GM12878 (cell line): ENCODE measurements at regions of chr1 and their contacts with region 1.

Region 1: GRCh38 chr1:43763497-43763973 is 56.2 kb downstream of the ST3GAL3 start:
- DNase-seq: peak; percentile 72
- ATAC-seq: peak; percentile 87
- H3K4me3 ChIP-seq: no peak overlapping the region
- H3K27ac ChIP-seq: no peak overlapping the region
- H3K4me1 ChIP-seq: peaks cover 18% of the 10 kb centered on the region
- H3K27me3 ChIP-seq: no peaks in the 10 kb centered on the region
- CTCF ChIP-seq: peak; percentile 83 to 98 (median 92)
- EP300 ChIP-seq: no peak
- POLR2A ChIP-seq: no peak
- RAD21 ChIP-seq: peak; percentile 99

Region 2: GRCh38 chr1:43238085-43238484 is 525.5 kb before region 1 on chr1:
- CTCF ChIA-PET with region 1: interaction called, 4 read pairs
- POLR2A ChIA-PET with region 1: no interaction called
- RAD21 ChIA-PET with region 1: interaction called, 4 read pairs
- SMC1A ChIA-PET with region 1: interaction called, 5 read pairs
- in situ Hi-C with region 1: no loop called
- intact Hi-C with region 1: loop called (anchors 5 kb)
- DNase-seq: no peak
- ATAC-seq: peak; percentile 64
- H3K4me3 ChIP-seq: no peak overlapping the region
- H3K27ac ChIP-seq: no peak overlapping the region
- H3K4me1 ChIP-seq: peaks cover 19% of the 10 kb centered on the region
- H3K27me3 ChIP-seq: no peaks in the 10 kb centered on the region
- CTCF ChIP-seq: peak; percentile 62 to 76 (median 74)
- EP300 ChIP-seq: no peak
- POLR2A ChIP-seq: no peak
- RAD21 ChIP-seq: peak; percentile 91

Region 3: GRCh38 chr1:43348809-43349583 is 414.5 kb before region 1 on chr1:
- CTCF ChIA-PET with region 1: no interaction called
- POLR2A ChIA-PET with region 1: no interaction called
- RAD21 ChIA-PET with region 1: no interaction called
- SMC1A ChIA-PET with region 1: no interaction called
- in situ Hi-C with region 1: no loop called
- intact Hi-C with region 1: no loop called
- DNase-seq: no peak
- ATAC-seq: no peak
- H3K4me3 ChIP-seq: peak overlapping the region; percentile 50; the same call in 1 of the 2 replicates
- H3K27ac ChIP-seq: peak overlapping the region; percentile 58; the same call in 1 of the 2 replicates
- H3K4me1 ChIP-seq: no peaks in the 10 kb centered on the region
- H3K27me3 ChIP-seq: no peaks in the 10 kb centered on the region
- CTCF ChIP-seq: no peak
- EP300 ChIP-seq: no peak
- POLR2A ChIP-seq: peak; percentile 68
- RAD21 ChIP-seq: no peak

Region 4: GRCh38 chr1:43611950-43612349 is 151.6 kb before region 1 on chr1:
- CTCF ChIA-PET with region 1: no interaction called
- POLR2A ChIA-PET with region 1: no interaction called
- RAD21 ChIA-PET with region 1: no interaction called
- SMC1A ChIA-PET with region 1: no interaction called
- in situ Hi-C with region 1: no loop called
- intact Hi-C with region 1: no loop called
- DNase-seq: no peak
- ATAC-seq: no peak
- H3K4me3 ChIP-seq: no peak overlapping the region
- H3K27ac ChIP-seq: no peak overlapping the region
- H3K4me1 ChIP-seq: no peaks in the 10 kb centered on the region
- H3K27me3 ChIP-seq: no peaks in the 10 kb centered on the region; a peak in 3 of 4 replicates
- CTCF ChIP-seq: no peak; a peak in 1 of 6 replicates
- EP300 ChIP-seq: no peak
- POLR2A ChIP-seq: no peak
- RAD21 ChIP-seq: no peak

Region 5: DNA sequence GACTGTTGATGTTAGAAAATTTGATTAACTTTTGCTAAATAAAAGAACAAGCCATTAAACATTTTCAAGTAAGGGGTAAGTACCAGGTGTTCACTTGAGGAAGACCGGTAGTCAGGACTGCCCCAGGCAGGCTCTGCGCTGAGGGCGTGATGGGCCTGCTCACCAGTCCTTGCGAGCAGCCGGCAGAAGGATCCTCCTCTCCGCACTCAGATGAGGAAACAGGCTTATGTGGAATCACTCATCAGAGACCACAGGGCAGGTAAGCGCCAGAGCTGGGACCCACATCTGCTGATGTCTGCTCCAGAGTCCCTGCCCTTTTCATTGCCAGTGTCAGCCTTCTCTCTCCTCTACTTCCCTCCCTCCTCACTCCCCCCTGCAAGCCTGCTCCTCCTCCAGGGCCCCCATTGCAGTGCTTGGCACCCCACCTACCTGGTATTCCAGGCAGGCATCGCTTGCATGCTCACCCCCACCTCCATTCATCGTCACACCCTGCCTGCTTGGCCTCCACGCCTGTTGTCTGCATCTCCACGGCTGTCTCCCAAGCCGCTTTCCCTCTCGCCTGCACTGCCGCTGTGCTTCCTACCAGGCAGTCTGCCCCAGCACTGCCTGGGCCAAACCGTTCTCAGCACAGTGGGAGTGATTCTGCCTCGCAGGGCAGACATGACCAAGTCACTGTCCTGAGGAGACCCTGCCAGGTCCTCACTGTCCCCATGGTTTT is 138.3 kb before region 1 on chr1:
- CTCF ChIA-PET with region 1: no interaction called
- POLR2A ChIA-PET with region 1: no interaction called
- RAD21 ChIA-PET with region 1: no interaction called
- SMC1A ChIA-PET with region 1: no interaction called
- in situ Hi-C with region 1: no loop called
- intact Hi-C with region 1: no loop called
- DNase-seq: no peak
- ATAC-seq: no peak
- H3K4me3 ChIP-seq: no peak overlapping the region
- H3K27ac ChIP-seq: no peak overlapping the region
- H3K4me1 ChIP-seq: no peaks in the 10 kb centered on the region
- H3K27me3 ChIP-seq: no peaks in the 10 kb centered on the region; a peak in 3 of 4 replicates
- CTCF ChIP-seq: no peak
- EP300 ChIP-seq: no peak
- POLR2A ChIP-seq: no peak
- RAD21 ChIP-seq: no peak

Region 6: GRCh38 chr1:43774359-43774758 is 10.8 kb after region 1 on chr1:
- CTCF ChIA-PET with region 1: interaction called, 34 read pairs
- POLR2A ChIA-PET with region 1: interaction called, 6 read pairs
- RAD21 ChIA-PET with region 1: interaction called, 8 read pairs
- SMC1A ChIA-PET with region 1: interaction called, 48 read pairs
- in situ Hi-C with region 1: no loop called
- intact Hi-C with region 1: no loop called
- DNase-seq: no peak
- ATAC-seq: no peak
- H3K4me3 ChIP-seq: no peak overlapping the region
- H3K27ac ChIP-seq: no peak overlapping the region
- H3K4me1 ChIP-seq: peaks cover 9% of the 10 kb centered on the region
- H3K27me3 ChIP-seq: no peaks in the 10 kb centered on the region
- CTCF ChIP-seq: no peak
- EP300 ChIP-seq: no peak
- POLR2A ChIP-seq: no peak
- RAD21 ChIP-seq: no peak

Region 7: DNA sequence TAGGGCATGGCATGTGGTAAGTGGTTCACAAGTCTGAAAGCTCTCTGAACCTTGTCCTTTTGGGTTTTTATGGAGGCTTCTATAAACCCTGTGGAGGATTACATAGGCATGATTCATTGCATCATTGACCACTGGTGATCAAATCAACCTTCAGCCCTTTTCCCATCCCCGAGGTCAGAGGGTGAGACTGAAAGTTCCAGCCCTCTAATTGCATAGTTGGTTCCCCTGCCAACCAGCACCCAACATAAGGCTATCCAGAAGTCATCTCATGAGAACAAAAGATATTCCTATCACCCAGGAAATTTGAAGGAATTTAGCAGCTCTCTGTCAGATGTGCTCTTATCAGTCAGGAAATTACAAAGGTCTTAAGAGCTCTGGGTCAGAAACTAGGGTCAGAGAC is 80.6 kb after region 1 on chr1:
- CTCF ChIA-PET with region 1: interaction called, 25 read pairs
- POLR2A ChIA-PET with region 1: no interaction called
- RAD21 ChIA-PET with region 1: interaction called, 8 read pairs
- SMC1A ChIA-PET with region 1: interaction called, 12 read pairs
- in situ Hi-C with region 1: no loop called
- intact Hi-C with region 1: no loop called
- DNase-seq: no peak
- ATAC-seq: no peak
- H3K4me3 ChIP-seq: no peak overlapping the region
- H3K27ac ChIP-seq: no peak overlapping the region
- H3K4me1 ChIP-seq: peaks cover 8% of the 10 kb centered on the region
- H3K27me3 ChIP-seq: no peaks in the 10 kb centered on the region
- CTCF ChIP-seq: no peak
- EP300 ChIP-seq: no peak
- POLR2A ChIP-seq: no peak
- RAD21 ChIP-seq: no peak

Region 8: GRCh38 chr1:43902058-43902831 is 138.7 kb after region 1 on chr1:
- CTCF ChIA-PET with region 1: interaction called, 22 read pairs
- POLR2A ChIA-PET with region 1: no interaction called
- RAD21 ChIA-PET with region 1: interaction called, 73 read pairs
- SMC1A ChIA-PET with region 1: interaction called, 74 read pairs
- in situ Hi-C with region 1: no loop called
- intact Hi-C with region 1: no loop called
- DNase-seq: no peak
- ATAC-seq: no peak
- H3K4me3 ChIP-seq: no peak overlapping the region
- H3K27ac ChIP-seq: no peak overlapping the region
- H3K4me1 ChIP-seq: no peaks in the 10 kb centered on the region
- H3K27me3 ChIP-seq: no peaks in the 10 kb centered on the region
- CTCF ChIP-seq: no peak
- EP300 ChIP-seq: no peak
- POLR2A ChIP-seq: no peak
- RAD21 ChIP-seq: no peak

Region 9: GRCh38 chr1:43946236-43947060 is 182.9 kb after region 1 on chr1 and contains the start of gene IPO13:
- CTCF ChIA-PET with region 1: interaction called, 1,117 read pairs
- POLR2A ChIA-PET with region 1: interaction called, 4 read pairs
- RAD21 ChIA-PET with region 1: interaction called, 78 read pairs
- SMC1A ChIA-PET with region 1: interaction called, 100 read pairs
- in situ Hi-C with region 1: no loop called
- intact Hi-C with region 1: no loop called
- DNase-seq: peak; percentile 89
- ATAC-seq: peak; percentile 96
- H3K4me3 ChIP-seq: peak within 1 kb of the TSS; percentile 96
- H3K27ac ChIP-seq: peak within 1 kb of the TSS; percentile 93
- H3K4me1 ChIP-seq: peaks cover 10% of the 10 kb centered on the region
- H3K27me3 ChIP-seq: no peaks in the 10 kb centered on the region
- CTCF ChIP-seq: peak; percentile 83 to 87 (median 85)
- EP300 ChIP-seq: no peak
- POLR2A ChIP-seq: peak; percentile 95
- RAD21 ChIP-seq: peak; percentile 59
- polyA plus RNA-seq, gene IPO13: 7.1 to 9.5 TPM

Region 10: DNA sequence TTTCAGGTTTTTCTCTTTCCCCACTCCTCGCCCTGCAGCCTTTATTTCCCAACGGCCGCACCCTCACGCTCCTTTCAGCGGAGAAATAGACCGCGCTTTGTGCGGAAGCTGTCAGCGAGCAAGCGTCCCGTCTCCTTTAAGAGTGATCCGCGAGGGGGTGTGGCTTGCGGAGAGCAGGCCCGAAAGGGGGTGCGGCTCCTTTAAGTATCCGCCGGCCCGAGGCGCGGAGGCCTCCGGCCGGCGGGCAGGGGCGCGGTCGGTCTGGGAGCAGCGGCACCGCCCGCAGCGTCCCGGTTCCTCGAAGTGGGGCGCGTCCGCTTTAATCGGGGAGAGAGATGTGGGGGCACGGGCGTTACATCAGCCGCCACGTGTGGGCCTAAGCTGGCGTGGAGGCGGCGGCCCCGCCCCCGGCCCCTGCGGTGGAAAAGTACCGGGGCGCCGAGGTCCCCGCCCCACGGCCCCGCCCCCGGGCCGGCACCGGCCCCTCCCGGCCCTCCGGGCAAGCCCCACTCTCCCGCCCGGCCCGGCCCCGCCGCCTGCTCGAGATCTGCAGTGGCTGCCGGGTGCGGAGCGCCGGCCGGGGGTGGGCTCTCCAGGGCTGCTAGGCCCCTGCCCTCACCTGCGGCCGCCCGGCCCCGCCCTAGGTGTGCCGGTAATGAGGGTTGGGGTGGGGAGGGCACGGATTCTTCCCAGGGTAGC is 266.5 kb after region 1 on chr1:
- CTCF ChIA-PET with region 1: interaction called, 35 read pairs
- POLR2A ChIA-PET with region 1: no interaction called
- RAD21 ChIA-PET with region 1: interaction called, 8 read pairs
- SMC1A ChIA-PET with region 1: interaction called, 16 read pairs
- in situ Hi-C with region 1: loop called (anchors 10 kb)
- intact Hi-C with region 1: no loop called
- DNase-seq: peak; percentile 45
- ATAC-seq: peak; percentile 89
- H3K4me3 ChIP-seq: peak overlapping the region; percentile 65
- H3K27ac ChIP-seq: peak overlapping the region; percentile 79
- H3K4me1 ChIP-seq: peaks cover 10% of the 10 kb centered on the region
- H3K27me3 ChIP-seq: no peaks in the 10 kb centered on the region
- CTCF ChIP-seq: no peak
- EP300 ChIP-seq: 0 out of 4 replicates have a peak, but pooled peaks of 1 of the 2 experiments have one; percentile 13
- POLR2A ChIP-seq: peak; percentile 62
- RAD21 ChIP-seq: no peak

Region 11: GRCh38 chr1:44696789-44697345 is 933.3 kb after region 1 on chr1:
- CTCF ChIA-PET with region 1: no interaction called
- POLR2A ChIA-PET with region 1: no interaction called
- RAD21 ChIA-PET with region 1: no interaction called
- SMC1A ChIA-PET with region 1: no interaction called
- in situ Hi-C with region 1: no loop called
- intact Hi-C with region 1: no loop called
- DNase-seq: no peak
- ATAC-seq: peak; percentile 74
- H3K4me3 ChIP-seq: no peak overlapping the region
- H3K27ac ChIP-seq: peak overlapping the region; percentile 45
- H3K4me1 ChIP-seq: peaks cover 51% of the 10 kb centered on the region
- H3K27me3 ChIP-seq: no peaks in the 10 kb centered on the region
- CTCF ChIP-seq: no peak
- EP300 ChIP-seq: no peak
- POLR2A ChIP-seq: 0 out of 2 replicates have a peak, but pooled peaks have one; percentile 24
- RAD21 ChIP-seq: no peak